ENCODE measurements at regions of chr6 and their contacts with region 1.

Region 1: GRCh38 chr6:26342106-26343004 is 22.6 kb upstream of the BTN3A2 start:
- DNase-seq: no peak
- H3K4me3 Mint-ChIP-seq: peak overlapping the region; percentile 84
- H3K27ac Mint-ChIP-seq: peak overlapping the region; percentile 53
- H3K4me1 Mint-ChIP-seq: peaks cover 27% of the 10 kb centered on the region
- H3K27me3 Mint-ChIP-seq: peaks cover 7% of the 10 kb centered on the region

Region 2: GRCh38 chr6:26124781-26125685 is 217.3 kb before region 1 on chr6:
- intact Hi-C with region 1: no loop called
- DNase-seq: peak; percentile 7
- H3K4me3 Mint-ChIP-seq: peak overlapping the region; percentile 99
- H3K27ac Mint-ChIP-seq: peak overlapping the region; percentile 100
- H3K4me1 Mint-ChIP-seq: peaks cover 61% of the 10 kb centered on the region
- H3K27me3 Mint-ChIP-seq: peaks cover 3% of the 10 kb centered on the region

Region 3: GRCh38 chr6:26363882-26364701 is 21.7 kb after region 1 on chr6:
- intact Hi-C with region 1: loop called (anchors 1 kb)
- DNase-seq: peak; percentile 10
- H3K4me3 Mint-ChIP-seq: no peak overlapping the region
- H3K27ac Mint-ChIP-seq: no peak overlapping the region
- H3K4me1 Mint-ChIP-seq: peaks cover 45% of the 10 kb centered on the region
- H3K27me3 Mint-ChIP-seq: no peaks in the 10 kb centered on the region

Region 4: GRCh38 chr6:26401987-26402658 is 59.8 kb after region 1 on chr6 and contains the start of gene BTN3A1:
- intact Hi-C with region 1: loop called (anchors 1 kb)
- DNase-seq: peak; percentile 61
- H3K4me3 Mint-ChIP-seq: peak within 1 kb of the TSS; percentile 94
- H3K27ac Mint-ChIP-seq: peak within 1 kb of the TSS; percentile 97
- H3K4me1 Mint-ChIP-seq: peaks cover 56% of the 10 kb centered on the region
- H3K27me3 Mint-ChIP-seq: no peaks in the 10 kb centered on the region
- total RNA-seq, gene BTN3A1: 28.2 and 30.6 TPM in 2 replicates

Region 5: DNA sequence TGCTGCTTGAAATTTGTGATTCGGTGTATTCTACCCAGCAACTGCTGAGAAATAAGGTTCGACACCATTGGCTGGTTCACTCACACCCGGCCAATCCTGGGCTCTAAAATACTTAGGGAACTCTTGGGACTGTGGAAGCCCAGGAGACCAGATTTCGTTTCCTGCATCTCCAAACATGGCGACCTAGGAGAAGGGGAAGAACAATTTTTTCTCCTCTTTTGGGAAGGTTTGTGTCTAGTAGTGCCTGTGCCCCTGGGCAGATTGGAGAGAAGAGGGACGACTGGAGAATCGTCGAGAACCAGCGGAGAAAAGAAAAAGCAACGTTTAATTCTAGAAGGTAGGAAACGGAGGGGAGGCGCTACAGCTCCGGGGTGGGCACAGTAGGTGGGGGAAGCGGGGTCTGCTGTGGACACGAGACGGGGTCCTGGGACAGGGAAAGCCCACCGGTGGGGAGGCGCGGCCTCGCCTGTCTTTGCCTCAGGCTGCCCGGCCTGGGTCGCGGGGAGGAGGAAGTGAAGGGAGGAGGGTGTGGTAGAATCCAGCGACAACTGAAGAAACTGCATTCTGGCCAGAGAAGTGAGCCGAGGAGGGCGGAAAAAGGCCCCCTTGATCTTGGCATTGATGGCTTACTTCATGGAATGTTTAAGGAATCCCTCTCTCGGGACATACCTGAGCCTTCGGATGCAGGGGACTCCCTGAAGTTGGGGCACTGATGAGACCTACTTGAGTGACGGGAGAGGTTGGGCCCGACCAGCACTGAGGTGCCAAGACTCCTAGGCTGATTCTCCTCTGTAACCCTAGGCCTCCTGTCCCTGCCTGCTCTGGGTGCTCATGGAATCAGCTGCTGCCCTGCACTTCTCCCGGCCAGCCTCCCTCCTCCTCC is 115.7 kb after region 1 on chr6 and contains the start of gene BTN2A1:
- intact Hi-C with region 1: loop called (anchors 5 kb)
- DNase-seq: peak; percentile 68
- H3K4me3 Mint-ChIP-seq: peak within 1 kb of the TSS; percentile 100
- H3K27ac Mint-ChIP-seq: peak within 1 kb of the TSS; percentile 96
- H3K4me1 Mint-ChIP-seq: peaks cover 57% of the 10 kb centered on the region
- H3K27me3 Mint-ChIP-seq: no peaks in the 10 kb centered on the region
- total RNA-seq, gene BTN2A1: 19.9 TPM in 2 replicates

Region 6: DNA sequence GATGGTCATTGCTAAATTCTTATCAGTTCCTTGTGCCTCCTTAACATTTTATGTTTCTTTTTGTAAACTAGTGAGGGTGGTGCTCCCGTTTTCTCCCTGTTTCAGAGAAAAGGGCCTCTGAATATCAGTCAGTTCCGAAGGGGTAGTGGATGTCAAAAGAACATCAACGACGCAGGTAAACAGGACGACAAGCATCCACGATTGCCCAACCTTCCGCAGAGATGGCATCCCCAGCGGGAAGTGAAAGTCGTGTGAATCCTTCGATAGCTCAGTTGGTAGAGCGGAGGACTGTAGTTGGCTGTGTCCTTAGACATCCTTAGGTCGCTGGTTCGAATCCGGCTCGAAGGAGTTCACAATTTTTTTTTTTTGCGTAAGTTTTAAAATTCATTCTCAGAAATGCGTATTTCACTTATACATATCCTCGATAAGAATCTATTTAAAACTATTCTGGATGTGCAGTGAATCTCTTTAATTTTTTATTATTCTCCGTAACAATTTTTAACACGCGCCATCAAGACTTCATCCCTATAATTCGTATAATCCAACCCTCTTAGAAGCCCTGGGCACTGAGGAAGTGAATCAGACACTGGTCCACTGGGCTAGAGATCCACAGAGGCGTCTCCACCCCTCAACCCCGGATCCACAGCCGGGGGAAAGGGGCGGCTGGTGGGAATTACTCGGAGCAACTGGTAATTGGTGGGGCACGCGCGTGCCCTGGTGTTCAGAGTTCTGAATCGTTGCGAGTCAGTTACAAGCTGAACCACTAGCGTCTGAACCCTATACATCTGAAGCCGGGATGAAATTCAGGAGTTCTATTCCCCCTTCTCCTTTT is 226.5 kb after region 1 on chr6:
- intact Hi-C with region 1: loop called (anchors 1 kb)
- DNase-seq: peak; percentile 94
- H3K4me3 Mint-ChIP-seq: peak overlapping the region; percentile 93
- H3K27ac Mint-ChIP-seq: peak overlapping the region; percentile 98
- H3K4me1 Mint-ChIP-seq: peaks cover 47% of the 10 kb centered on the region
- H3K27me3 Mint-ChIP-seq: peaks cover 5% of the 10 kb centered on the region

Region 7: GRCh38 chr6:27078734-27079357 is 736.5 kb after region 1 on chr6:
- intact Hi-C with region 1: loop called (anchors 5 kb)
- DNase-seq: no peak
- H3K4me3 Mint-ChIP-seq: peak overlapping the region; percentile 56
- H3K27ac Mint-ChIP-seq: no peak overlapping the region
- H3K4me1 Mint-ChIP-seq: peaks cover 9% of the 10 kb centered on the region
- H3K27me3 Mint-ChIP-seq: peaks cover 35% of the 10 kb centered on the region